ENCODE measurements at regions of chr4 and their contacts with region 1.

Region 1: GRCh38 chr4:99949034-99949998 is 759 bp downstream of the H2AZ1 start:
- DNase-seq: peak; percentile 83 to 88
- ATAC-seq: peak; percentile 41 to 64 (median 52)
- H3K4me3 ChIP-seq: peak overlapping the region; percentile 89
- H3K27ac ChIP-seq: peak overlapping the region; percentile 95
- H3K4me1 ChIP-seq: peaks cover 31% of the 10 kb centered on the region
- H3K27me3 ChIP-seq: no peaks in the 10 kb centered on the region
- CTCF ChIP-seq: peak; percentile 79

Region 2: DNA sequence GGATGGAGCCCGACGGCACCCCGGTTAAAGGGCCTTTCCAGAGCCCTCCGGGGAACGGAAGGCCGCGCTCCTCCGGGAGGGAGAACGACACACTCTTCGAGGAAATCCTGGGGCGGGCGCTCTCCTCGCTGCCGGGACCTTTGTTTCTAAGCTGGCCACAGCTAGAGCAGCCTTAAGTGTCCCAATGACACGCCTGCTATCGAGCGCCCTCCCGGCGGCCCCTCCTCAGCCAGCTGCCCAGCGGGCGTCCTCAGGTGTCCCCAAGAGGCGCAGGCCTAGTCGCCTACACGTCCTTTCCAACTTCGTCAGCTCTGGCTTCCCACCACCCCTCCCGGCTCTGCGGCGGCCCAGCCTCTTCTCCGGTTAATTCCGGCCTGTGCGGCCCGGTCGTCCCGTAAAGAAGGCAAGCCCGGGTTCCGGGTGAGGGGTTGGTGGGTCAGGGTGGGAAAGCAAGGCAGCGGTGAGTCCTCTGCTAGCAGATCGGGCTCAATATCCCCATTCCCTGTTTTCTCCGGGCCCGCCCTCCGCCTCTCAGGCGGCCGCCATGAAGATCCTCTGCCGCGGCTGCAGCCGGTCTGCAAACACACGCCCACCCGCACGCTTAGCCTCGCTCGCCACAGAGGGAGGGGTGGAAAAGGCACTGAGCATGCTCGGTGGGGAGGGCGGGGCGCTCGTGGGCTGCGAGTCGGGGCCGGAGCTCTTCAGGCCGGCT is 1688.6 kb before region 1 on chr4:
- intact Hi-C with region 1: loop called in 1 of 2 experiments (anchors 10 kb)
- DNase-seq: peak; percentile 96 to 98
- ATAC-seq: peak; percentile 94 to 97 (median 96)
- H3K4me3 ChIP-seq: peak overlapping the region; percentile 78
- H3K27ac ChIP-seq: peak overlapping the region; percentile 89
- H3K4me1 ChIP-seq: peaks cover 15% of the 10 kb centered on the region
- H3K27me3 ChIP-seq: no peaks in the 10 kb centered on the region
- CTCF ChIP-seq: no peak

Region 3: DNA sequence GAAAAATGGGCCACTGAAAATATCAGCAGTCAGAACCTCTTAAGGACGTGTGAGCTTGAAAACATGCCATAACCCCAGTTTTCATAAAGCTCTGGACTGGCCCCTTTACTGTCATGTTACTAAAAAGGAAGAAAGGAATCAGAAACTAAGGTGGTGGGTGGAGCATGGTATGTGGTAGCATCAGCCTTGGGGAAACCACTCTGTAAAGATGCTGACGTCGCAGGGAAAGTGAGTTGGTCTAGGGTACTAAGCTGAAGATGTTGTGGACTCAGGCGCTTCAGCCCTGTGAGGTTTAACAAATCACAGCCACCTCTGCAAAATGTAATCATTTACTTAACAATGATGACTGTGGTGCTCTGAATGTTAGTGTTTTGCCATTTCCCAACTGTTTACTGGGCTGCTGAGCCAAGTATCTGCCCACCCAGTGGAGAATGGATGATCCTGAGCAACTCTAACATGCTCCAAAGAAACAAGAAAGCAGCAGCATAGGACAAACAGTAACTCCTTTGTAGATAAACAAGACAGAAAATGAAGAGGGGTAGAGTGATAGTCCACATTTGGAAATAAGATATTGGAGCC is 325.1 kb before region 1 on chr4:
- intact Hi-C with region 1: loop called in 1 of 2 experiments (anchors 10 kb)
- DNase-seq: no peak
- ATAC-seq: no peak
- H3K4me3 ChIP-seq: no peak overlapping the region
- H3K27ac ChIP-seq: no peak overlapping the region
- H3K4me1 ChIP-seq: no peaks in the 10 kb centered on the region
- H3K27me3 ChIP-seq: no peaks in the 10 kb centered on the region
- CTCF ChIP-seq: no peak

Region 4: GRCh38 chr4:99655308-99656081 is 293.8 kb before region 1 on chr4:
- intact Hi-C with region 1: no loop called
- DNase-seq: peak in 1 of 2 donors; percentile 83
- ATAC-seq: peak; percentile 28 to 54 (median 51)
- H3K4me3 ChIP-seq: peak overlapping the region; percentile 78
- H3K27ac ChIP-seq: peak overlapping the region; percentile 99
- H3K4me1 ChIP-seq: peaks cover 30% of the 10 kb centered on the region
- H3K27me3 ChIP-seq: no peaks in the 10 kb centered on the region
- CTCF ChIP-seq: no peak

Region 5: DNA sequence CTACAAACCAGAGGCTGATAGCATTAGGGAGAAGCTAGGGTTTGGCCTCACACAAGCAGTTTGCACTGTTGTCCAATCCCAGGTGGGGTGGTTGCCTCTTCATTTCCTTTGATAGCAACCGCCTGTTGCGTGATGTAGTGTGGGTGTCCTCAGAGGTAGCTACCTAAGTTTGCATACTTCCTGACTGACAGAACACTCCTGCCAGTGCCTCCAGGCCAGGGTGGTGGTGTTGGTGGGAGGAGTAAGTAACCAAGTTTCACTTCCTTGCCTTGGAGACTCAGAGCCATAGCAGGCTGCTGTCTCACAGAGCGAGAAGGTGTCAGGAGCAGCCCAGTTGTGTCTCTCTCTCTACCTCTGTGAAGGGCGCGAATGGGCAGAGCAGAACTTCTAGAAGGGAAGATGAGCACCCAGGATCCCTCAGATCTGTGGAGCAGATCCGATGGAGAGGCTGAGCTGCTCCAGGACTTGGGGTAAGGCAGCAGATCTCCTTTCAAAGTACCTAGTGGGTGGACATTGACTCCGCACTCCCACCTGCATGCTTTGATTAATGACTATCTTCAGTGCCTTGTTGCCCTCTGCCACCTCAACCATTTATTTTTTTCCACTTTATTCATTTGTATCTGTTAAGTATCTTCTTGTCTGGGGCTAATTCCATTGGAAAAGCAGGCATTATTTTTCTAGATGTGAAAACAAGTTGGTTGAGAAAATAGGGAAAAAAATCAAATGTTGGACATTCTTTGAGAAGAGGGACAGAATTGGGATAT is 132.6 kb before region 1 on chr4 and contains the start of gene DAPP1:
- intact Hi-C with region 1: loop called in 1 of 2 experiments (anchors 10 kb)
- DNase-seq: peak in 1 of 2 donors; percentile 13
- ATAC-seq: peak in 2 of 4 donors; percentile 23 to 27
- H3K4me3 ChIP-seq: peak within 1 kb of the TSS; percentile 30
- H3K27ac ChIP-seq: no peak within 1 kb of the TSS
- H3K4me1 ChIP-seq: no peaks in the 10 kb centered on the region
- H3K27me3 ChIP-seq: no peaks in the 10 kb centered on the region
- CTCF ChIP-seq: no peak
- total RNA-seq, gene DAPP1: 0.46 to 1.3 (median 0.76) TPM

Region 6: GRCh38 chr4:99894161-99894997 is 54.9 kb before region 1 on chr4 and contains the start of gene LAMTOR3:
- intact Hi-C with region 1: loop called (anchors 2 kb)
- DNase-seq: peak; percentile 90 to 96
- ATAC-seq: peak; percentile 99
- H3K4me3 ChIP-seq: peak within 1 kb of the TSS; percentile 86
- H3K27ac ChIP-seq: peak within 1 kb of the TSS; percentile 82
- H3K4me1 ChIP-seq: peaks cover 17% of the 10 kb centered on the region
- H3K27me3 ChIP-seq: no peaks in the 10 kb centered on the region
- CTCF ChIP-seq: no peak
- total RNA-seq, gene LAMTOR3: 21.6 to 25.8 (median 23.2) TPM